GM23248 (cell line): ENCODE measurements at regions of chr10 and their contacts with region 1.

Region 1: GRCh38 chr10:69004821-69005220 is 16.2 kb downstream of the KIFBP start:
- DNase-seq: peak; percentile 78
- H3K4me3 ChIP-seq: no peak overlapping the region
- H3K27ac ChIP-seq: no peak overlapping the region
- H3K4me1 ChIP-seq: peaks cover 14% of the 10 kb centered on the region
- H3K27me3 ChIP-seq: no peaks in the 10 kb centered on the region

Region 2: DNA sequence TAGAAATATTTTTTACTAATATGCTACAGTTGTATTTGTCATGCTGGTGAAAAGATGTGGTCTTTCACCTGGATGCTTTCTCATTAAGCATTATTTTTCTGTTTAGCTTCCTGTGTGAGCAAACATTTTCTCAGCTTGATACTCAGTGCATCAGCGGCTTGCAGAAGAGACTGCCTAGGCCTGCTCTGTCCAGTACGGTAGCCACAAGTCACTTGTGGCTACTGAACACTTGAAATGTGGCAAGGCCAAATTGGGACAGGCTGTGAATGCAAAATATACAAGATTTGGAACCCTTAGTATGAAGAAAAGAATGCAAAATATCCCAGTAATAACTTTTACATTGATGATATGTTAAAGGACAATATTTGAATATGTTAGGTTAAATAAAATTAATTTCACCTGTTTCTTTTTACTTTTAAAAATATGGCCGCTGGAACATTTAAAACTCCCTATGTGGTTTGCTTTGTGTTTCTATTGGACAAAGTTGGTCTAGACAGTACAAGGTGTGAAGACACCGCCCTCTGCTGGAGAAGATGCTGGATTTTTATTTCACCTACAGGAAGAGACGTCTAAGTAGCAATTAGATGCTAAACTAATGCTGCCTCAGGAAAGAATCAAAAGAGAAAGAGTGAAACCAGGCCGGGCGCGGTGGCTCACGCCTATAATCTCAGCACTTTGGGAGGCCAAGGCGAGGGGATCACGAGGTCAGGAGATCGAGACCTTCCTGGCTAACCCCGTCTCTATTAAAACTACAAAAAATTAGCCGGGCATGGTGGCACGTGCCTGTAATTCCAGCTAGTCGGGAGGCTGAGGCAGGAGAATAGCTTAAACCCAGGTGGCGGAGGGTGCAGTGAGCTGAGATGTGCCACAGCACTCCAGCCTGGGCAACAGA is 88.4 kb after region 1 on chr10:
- in situ Hi-C with region 1: loop called (anchors 5 kb)
- DNase-seq: peak; percentile 84
- H3K4me3 ChIP-seq: no peak overlapping the region
- H3K27ac ChIP-seq: no peak overlapping the region
- H3K4me1 ChIP-seq: peaks cover 25% of the 10 kb centered on the region
- H3K27me3 ChIP-seq: no peaks in the 10 kb centered on the region

Region 3: GRCh38 chr10:69439813-69440506 is 435.1 kb after region 1 on chr10:
- in situ Hi-C with region 1: no loop called
- DNase-seq: peak; percentile 83
- H3K4me3 ChIP-seq: no peak overlapping the region
- H3K27ac ChIP-seq: peak overlapping the region; percentile 61
- H3K4me1 ChIP-seq: peaks cover 27% of the 10 kb centered on the region
- H3K27me3 ChIP-seq: no peaks in the 10 kb centered on the region